SK-N-SH (cell line): ENCODE measurements at regions of chr6 and their contacts with region 1.

Region 1: GRCh38 chr6:31580807-31581433 is 1.3 kb downstream of the LTB start:
- DNase-seq: peak; percentile 97
- H3K4me3 ChIP-seq: peak overlapping the region; percentile 63 to 96
- H3K27ac ChIP-seq: peak overlapping the region in 1 of 2 experiments; percentile 51; a peak in 1 of 4 replicates
- H3K4me1 ChIP-seq: peaks cover 0 to 11% of the 10 kb centered on the region in 2 experiments; a peak in 1 of 4 replicates
- H3K27me3 ChIP-seq: no peaks in the 10 kb centered on the region
- CTCF ChIP-seq: peak; percentile 90
- EP300 ChIP-seq: no peak
- RAD21 ChIP-seq: peak; percentile 61

Region 2: DNA sequence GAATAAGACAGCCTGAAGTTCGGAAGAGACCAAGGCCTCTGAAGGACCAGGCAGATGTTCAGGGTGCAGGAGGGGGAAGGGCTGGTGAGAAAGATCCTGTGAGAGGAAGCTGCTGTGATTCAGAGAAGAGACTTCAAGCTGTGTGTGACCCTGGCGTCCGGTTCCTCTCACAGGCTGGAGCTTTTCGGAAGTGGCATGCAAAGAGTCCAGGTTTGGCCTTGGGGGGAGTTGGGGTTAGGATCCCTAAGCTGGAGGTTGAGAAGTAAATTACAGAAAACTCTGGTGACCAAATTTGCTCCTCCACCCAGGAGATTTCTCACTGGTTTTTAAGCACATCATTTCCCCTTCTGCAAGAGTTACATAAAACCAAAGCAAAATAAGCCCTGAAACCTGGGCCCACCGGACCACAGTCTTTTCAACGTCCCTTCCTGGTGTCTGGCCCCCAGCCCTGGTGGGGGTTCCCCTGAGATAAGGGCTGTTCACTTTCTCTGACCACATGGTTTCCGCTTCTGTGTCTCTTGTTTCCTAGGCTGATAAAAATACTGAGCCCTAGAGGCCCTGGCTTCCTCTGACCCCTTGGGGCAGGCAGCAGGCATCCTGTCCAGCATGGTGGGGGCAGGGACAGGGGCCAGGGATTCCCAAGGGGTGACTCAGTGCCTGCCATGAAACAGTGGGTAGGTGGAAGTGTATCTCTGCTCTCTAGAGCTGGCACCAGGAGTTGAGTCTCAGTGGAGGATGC is 20.8 kb before region 1 on chr6:
- CTCF ChIA-PET with region 1: interaction called, 29 read pairs
- POLR2A ChIA-PET with region 1: no interaction called
- DNase-seq: no peak
- H3K4me3 ChIP-seq: no peak overlapping the region
- H3K27ac ChIP-seq: peak overlapping the region; percentile 14 to 77; a peak in 3 of 4 replicates
- H3K4me1 ChIP-seq: peaks cover 0 to 20% of the 10 kb centered on the region in 2 experiments; a peak in 3 of 4 replicates
- H3K27me3 ChIP-seq: no peaks in the 10 kb centered on the region
- CTCF ChIP-seq: no peak
- EP300 ChIP-seq: peak in 1 of 2 experiments; percentile 20; a peak in 1 of 4 replicates
- RAD21 ChIP-seq: no peak

Region 3: GRCh38 chr6:31568537-31568961 is 12.4 kb before region 1 on chr6:
- CTCF ChIA-PET with region 1: interaction called, 18 read pairs
- POLR2A ChIA-PET with region 1: no interaction called
- DNase-seq: no peak
- H3K4me3 ChIP-seq: no peak overlapping the region
- H3K27ac ChIP-seq: no peak overlapping the region
- H3K4me1 ChIP-seq: no peaks in the 10 kb centered on the region
- H3K27me3 ChIP-seq: no peaks in the 10 kb centered on the region
- CTCF ChIP-seq: no peak
- EP300 ChIP-seq: no peak
- RAD21 ChIP-seq: no peak

Region 4: GRCh38 chr6:31764198-31764597 is 183.3 kb after region 1 on chr6:
- CTCF ChIA-PET with region 1: no interaction called
- POLR2A ChIA-PET with region 1: no interaction called
- DNase-seq: no peak
- H3K4me3 ChIP-seq: no peak overlapping the region
- H3K27ac ChIP-seq: no peak overlapping the region
- H3K4me1 ChIP-seq: peaks cover 0 to 8% of the 10 kb centered on the region in 2 experiments; a peak in 1 of 4 replicates
- H3K27me3 ChIP-seq: no peaks in the 10 kb centered on the region
- CTCF ChIP-seq: no peak
- EP300 ChIP-seq: no peak
- RAD21 ChIP-seq: no peak